Activated CD4-positive, alpha-beta memory T cell treated with anti-CD3 and anti-CD28 coated beads, Interleukin-2, amount 10 ng/mL, durations not matched to agents 7 days and 5 days (primary cell): ENCODE measurements at regions of chr12 and their contacts with region 1.

Region 1: GRCh38 chr12:54398995-54399793 is 14.7 kb upstream of the ZNF385A start:
- DNase-seq: peak; percentile 89
- H3K4me3 Mint-ChIP-seq: no peak overlapping the region
- H3K27ac Mint-ChIP-seq: no peak overlapping the region
- H3K4me1 Mint-ChIP-seq: peaks cover 27% of the 10 kb centered on the region
- H3K27me3 Mint-ChIP-seq: no peaks in the 10 kb centered on the region

Region 2: GRCh38 chr12:54337280-54337842 is 61.8 kb before region 1 on chr12:
- CTCF ChIA-PET with region 1: interaction called, 11 read pairs
- POLR2A ChIA-PET with region 1: no interaction called
- DNase-seq: no peak
- H3K4me3 Mint-ChIP-seq: no peak overlapping the region
- H3K27ac Mint-ChIP-seq: no peak overlapping the region
- H3K4me1 Mint-ChIP-seq: peaks cover 10% of the 10 kb centered on the region
- H3K27me3 Mint-ChIP-seq: no peaks in the 10 kb centered on the region

Region 3: GRCh38 chr12:54419088-54419892 is 20.1 kb after region 1 on chr12 and contains the start of gene ITGA5:
- CTCF ChIA-PET with region 1: interaction called, 282 read pairs
- POLR2A ChIA-PET with region 1: interaction called, 52 read pairs
- DNase-seq: peak; percentile 47
- H3K4me3 Mint-ChIP-seq: peak within 1 kb of the TSS; percentile 93
- H3K27ac Mint-ChIP-seq: peak within 1 kb of the TSS; percentile 85
- H3K4me1 Mint-ChIP-seq: peaks cover 58% of the 10 kb centered on the region
- H3K27me3 Mint-ChIP-seq: peaks cover 30% of the 10 kb centered on the region
- total RNA-seq, gene ITGA5: 102 to 107 TPM

Region 4: GRCh38 chr12:54439521-54440255 is 40.5 kb after region 1 on chr12:
- CTCF ChIA-PET with region 1: interaction called, 481 read pairs
- POLR2A ChIA-PET with region 1: interaction called, 46 read pairs
- DNase-seq: no peak
- H3K4me3 Mint-ChIP-seq: no peak overlapping the region
- H3K27ac Mint-ChIP-seq: no peak overlapping the region
- H3K4me1 Mint-ChIP-seq: peaks cover 5% of the 10 kb centered on the region
- H3K27me3 Mint-ChIP-seq: peaks cover 24% of the 10 kb centered on the region

Region 5: DNA sequence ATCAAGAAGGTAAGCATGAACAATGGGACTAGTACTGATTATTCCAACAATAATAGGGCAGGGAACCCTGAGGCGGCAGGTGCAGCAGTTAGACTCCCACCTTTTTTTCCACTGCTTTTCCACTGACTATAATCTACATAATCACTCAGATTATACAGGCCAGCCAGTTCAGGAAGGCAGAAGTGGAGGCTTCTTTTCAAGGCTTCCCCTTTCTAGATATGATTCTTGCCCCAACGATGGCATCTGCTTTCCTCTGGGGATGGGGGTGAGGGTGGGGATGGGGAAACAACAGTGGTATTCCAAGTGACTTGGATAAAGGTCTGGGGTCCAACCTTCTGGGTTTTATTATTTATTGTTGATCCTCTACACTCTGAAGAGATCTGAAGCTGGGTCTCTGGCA is 98.7 kb after region 1 on chr12:
- CTCF ChIA-PET with region 1: interaction called, 24 read pairs
- POLR2A ChIA-PET with region 1: interaction called, 7 read pairs
- DNase-seq: no peak
- H3K4me3 Mint-ChIP-seq: peak overlapping the region; percentile 99
- H3K27ac Mint-ChIP-seq: peak overlapping the region; percentile 95
- H3K4me1 Mint-ChIP-seq: peaks cover 45% of the 10 kb centered on the region
- H3K27me3 Mint-ChIP-seq: no peaks in the 10 kb centered on the region

Region 6: GRCh38 chr12:54592316-54592715 is 193.1 kb after region 1 on chr12:
- CTCF ChIA-PET with region 1: no interaction called
- POLR2A ChIA-PET with region 1: no interaction called
- DNase-seq: no peak
- H3K4me3 Mint-ChIP-seq: no peak overlapping the region
- H3K27ac Mint-ChIP-seq: no peak overlapping the region
- H3K4me1 Mint-ChIP-seq: peaks cover 4% of the 10 kb centered on the region
- H3K27me3 Mint-ChIP-seq: peaks cover 43% of the 10 kb centered on the region

Region 7: DNA sequence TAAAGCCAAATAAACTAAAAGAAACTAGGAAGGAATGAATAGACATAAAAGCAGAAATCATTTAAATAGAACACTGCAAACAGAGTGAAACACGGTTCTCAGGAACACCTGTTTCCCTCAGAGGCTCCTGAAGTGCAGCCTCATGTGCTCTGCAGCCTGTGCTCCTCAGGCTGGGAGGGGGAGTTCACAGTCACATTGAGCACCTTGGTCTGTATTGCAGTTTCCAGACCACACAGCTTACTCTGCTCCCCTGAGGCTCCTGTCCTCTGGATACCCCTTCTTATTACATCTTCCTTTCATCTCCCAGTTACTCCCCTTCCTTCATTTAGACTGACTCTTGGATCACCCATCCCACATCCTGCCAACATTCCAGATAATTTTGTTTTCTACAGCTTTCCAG is 298.7 kb after region 1 on chr12:
- CTCF ChIA-PET with region 1: no interaction called
- POLR2A ChIA-PET with region 1: no interaction called
- DNase-seq: no peak
- H3K4me3 Mint-ChIP-seq: no peak overlapping the region
- H3K27ac Mint-ChIP-seq: no peak overlapping the region
- H3K4me1 Mint-ChIP-seq: no peaks in the 10 kb centered on the region
- H3K27me3 Mint-ChIP-seq: peaks cover 31% of the 10 kb centered on the region